Activated CD4-positive, alpha-beta memory T cell treated with anti-CD3 and anti-CD28 coated beads for 36 hours (primary cell): ENCODE measurements at regions of chr7 and their contacts with region 1.

Region 1: DNA sequence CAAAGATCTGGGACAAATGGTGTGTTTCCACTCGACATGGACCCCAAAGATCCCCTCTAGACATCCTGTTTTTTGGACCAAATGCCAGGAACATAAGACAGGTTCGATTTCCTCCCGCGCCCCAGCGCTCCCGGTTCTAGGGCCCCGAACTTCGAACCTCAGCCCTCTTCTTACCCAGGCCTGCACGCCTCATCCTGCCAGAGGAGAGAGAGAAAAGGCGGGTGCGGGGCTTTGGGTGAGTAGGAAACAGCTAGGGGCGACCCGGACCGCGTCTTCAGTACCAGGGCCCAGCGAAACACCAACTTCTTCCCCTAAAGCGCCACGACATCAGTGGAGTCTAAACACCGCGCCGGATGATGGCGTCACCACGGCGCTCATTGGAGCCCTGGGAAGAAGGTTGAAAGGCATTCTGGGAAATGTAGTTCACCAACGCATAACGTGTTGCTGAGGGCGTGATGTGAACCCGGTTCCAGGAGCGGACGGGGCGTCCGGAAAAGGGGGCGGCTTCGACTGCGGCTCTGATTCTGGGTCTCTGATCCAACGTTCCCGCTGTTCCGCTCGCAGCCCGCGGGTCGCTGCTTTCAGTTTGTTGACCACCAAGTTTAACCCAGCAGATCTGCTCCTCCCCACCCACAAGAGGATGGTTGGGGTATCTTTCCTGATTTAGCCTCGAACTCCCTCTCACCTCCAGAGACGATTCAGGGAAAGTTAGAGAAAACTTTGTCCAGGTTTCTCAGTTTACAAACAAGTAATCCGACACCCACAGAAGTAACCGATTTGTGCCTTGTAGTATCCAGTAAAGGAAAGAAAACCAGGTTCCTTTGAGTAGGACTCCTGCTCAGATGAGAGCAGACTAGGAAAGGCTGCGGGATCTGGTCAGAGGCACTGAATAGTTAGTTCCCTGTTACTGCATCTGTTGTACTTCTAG is at the start of gene BET1:
- DNase-seq: peak; percentile 94
- H3K4me3 Mint-ChIP-seq: peak within 1 kb of the TSS; percentile 95
- H3K27ac Mint-ChIP-seq: peak within 1 kb of the TSS; percentile 92
- H3K4me1 Mint-ChIP-seq: peaks cover 37% of the 10 kb centered on the region
- H3K27me3 Mint-ChIP-seq: peaks cover 8% of the 10 kb centered on the region
- total RNA-seq, gene BET1: 19.3 to 20.5 TPM

Region 2: DNA sequence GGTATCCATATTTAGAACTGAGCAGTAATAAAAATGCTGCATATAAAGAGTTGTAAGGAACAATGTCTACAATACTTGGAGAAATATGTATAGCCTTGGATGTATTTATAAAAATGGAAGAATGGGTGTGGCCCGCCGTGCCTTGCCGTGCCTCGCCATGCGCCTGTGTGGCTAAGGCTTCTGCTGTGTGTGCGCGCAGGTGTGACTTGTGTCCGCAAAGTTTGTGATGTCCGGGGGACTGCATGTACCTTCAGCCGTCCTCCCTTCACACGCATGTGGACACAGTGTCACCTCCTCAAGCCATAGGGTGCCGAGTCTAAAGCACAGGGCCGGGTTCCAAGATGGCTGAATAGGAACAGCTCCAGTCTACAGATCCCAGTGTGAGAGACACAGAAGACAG is 896.3 kb before region 1 on chr7:
- CTCF ChIA-PET with region 1: no interaction called
- POLR2A ChIA-PET with region 1: no interaction called
- intact Hi-C with region 1: no loop called
- DNase-seq: no peak
- H3K4me3 Mint-ChIP-seq: no peak overlapping the region
- H3K27ac Mint-ChIP-seq: no peak overlapping the region
- H3K4me1 Mint-ChIP-seq: peaks cover 6% of the 10 kb centered on the region
- H3K27me3 Mint-ChIP-seq: no peaks in the 10 kb centered on the region

Region 3: GRCh38 chr7:93902777-93903423 is 101.4 kb before region 1 on chr7:
- CTCF ChIA-PET with region 1: no interaction called
- POLR2A ChIA-PET with region 1: no interaction called
- intact Hi-C with region 1: loop called (anchors 1 kb)
- DNase-seq: no peak
- H3K4me3 Mint-ChIP-seq: no peak overlapping the region
- H3K27ac Mint-ChIP-seq: no peak overlapping the region
- H3K4me1 Mint-ChIP-seq: no peaks in the 10 kb centered on the region
- H3K27me3 Mint-ChIP-seq: peaks cover 7% of the 10 kb centered on the region

Region 4: GRCh38 chr7:94022550-94022949 is 18.3 kb after region 1 on chr7:
- CTCF ChIA-PET with region 1: no interaction called
- POLR2A ChIA-PET with region 1: no interaction called
- intact Hi-C with region 1: loop called (anchors 1 kb)
- DNase-seq: peak; percentile 10
- H3K4me3 Mint-ChIP-seq: no peak overlapping the region
- H3K27ac Mint-ChIP-seq: no peak overlapping the region
- H3K4me1 Mint-ChIP-seq: peaks cover 5% of the 10 kb centered on the region
- H3K27me3 Mint-ChIP-seq: peaks cover 10% of the 10 kb centered on the region

Region 5: GRCh38 chr7:94059746-94060145 is 55.5 kb after region 1 on chr7:
- CTCF ChIA-PET with region 1: no interaction called
- POLR2A ChIA-PET with region 1: no interaction called
- intact Hi-C with region 1: loop called (anchors 5 kb)
- DNase-seq: no peak
- H3K4me3 Mint-ChIP-seq: no peak overlapping the region
- H3K27ac Mint-ChIP-seq: no peak overlapping the region
- H3K4me1 Mint-ChIP-seq: peaks cover 15% of the 10 kb centered on the region
- H3K27me3 Mint-ChIP-seq: peaks cover 23% of the 10 kb centered on the region

Region 6: GRCh38 chr7:94509879-94510581 is 505.7 kb after region 1 on chr7:
- CTCF ChIA-PET with region 1: no interaction called
- POLR2A ChIA-PET with region 1: no interaction called
- intact Hi-C with region 1: loop called (anchors 5 kb)
- DNase-seq: peak; percentile 71
- H3K4me3 Mint-ChIP-seq: peak overlapping the region; percentile 76
- H3K27ac Mint-ChIP-seq: peak overlapping the region; percentile 91
- H3K4me1 Mint-ChIP-seq: peaks cover 42% of the 10 kb centered on the region
- H3K27me3 Mint-ChIP-seq: no peaks in the 10 kb centered on the region

Region 7: DNA sequence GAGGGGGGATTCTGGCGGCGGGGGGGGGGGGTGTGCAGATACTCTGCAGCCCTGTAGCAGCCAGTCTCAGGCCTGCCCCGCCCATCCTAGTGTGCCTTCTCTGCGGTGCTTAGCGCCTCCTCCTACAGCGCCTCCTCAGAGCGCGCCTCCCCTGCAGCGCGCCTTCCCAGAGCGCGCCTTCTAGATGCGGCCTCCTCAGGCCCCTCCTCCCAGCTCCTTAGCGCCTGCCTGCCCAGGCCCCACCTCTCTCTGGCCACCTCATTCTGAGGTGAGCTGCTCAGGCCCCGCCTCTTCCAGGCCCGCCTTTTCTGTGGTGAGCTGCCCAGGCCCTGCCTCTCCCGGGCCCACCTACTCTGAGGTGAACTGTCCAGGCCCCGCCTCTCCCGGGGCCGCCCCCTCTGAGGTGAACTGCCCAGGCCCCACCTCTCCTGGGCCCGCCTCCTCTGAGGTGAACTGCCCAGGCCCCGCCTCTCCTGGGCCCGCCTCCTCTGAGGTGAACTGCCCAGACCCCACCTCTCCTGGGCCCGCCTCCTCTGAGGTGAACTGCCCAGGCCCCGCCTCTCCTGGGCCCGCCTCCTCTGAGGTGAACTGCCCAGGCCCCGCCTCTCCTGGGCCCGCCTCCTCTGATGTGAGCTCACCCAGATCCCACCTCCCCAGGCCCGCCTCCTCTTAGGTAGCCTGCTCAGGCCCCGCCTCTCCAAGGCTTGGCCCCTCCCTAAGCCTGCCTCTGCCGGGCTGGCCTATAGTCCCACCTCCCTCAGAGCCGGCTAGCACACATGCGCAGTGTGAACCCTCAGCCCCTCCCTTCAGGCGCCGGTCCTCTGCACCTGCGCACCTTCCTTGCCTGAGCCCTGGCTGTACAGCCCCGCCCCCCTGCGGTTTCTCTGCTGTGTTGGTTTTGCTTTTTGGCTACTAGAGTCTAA is 653.7 kb after region 1 on chr7:
- CTCF ChIA-PET with region 1: no interaction called
- POLR2A ChIA-PET with region 1: no interaction called
- intact Hi-C with region 1: loop called (anchors 1 kb)
- DNase-seq: peak; percentile 95
- H3K4me3 Mint-ChIP-seq: peak overlapping the region; percentile 85
- H3K27ac Mint-ChIP-seq: no peak overlapping the region
- H3K4me1 Mint-ChIP-seq: peaks cover 12% of the 10 kb centered on the region
- H3K27me3 Mint-ChIP-seq: peaks cover 16% of the 10 kb centered on the region